ENCODE measurements at regions of chr17 and their contacts with region 1.

Region 1: DNA sequence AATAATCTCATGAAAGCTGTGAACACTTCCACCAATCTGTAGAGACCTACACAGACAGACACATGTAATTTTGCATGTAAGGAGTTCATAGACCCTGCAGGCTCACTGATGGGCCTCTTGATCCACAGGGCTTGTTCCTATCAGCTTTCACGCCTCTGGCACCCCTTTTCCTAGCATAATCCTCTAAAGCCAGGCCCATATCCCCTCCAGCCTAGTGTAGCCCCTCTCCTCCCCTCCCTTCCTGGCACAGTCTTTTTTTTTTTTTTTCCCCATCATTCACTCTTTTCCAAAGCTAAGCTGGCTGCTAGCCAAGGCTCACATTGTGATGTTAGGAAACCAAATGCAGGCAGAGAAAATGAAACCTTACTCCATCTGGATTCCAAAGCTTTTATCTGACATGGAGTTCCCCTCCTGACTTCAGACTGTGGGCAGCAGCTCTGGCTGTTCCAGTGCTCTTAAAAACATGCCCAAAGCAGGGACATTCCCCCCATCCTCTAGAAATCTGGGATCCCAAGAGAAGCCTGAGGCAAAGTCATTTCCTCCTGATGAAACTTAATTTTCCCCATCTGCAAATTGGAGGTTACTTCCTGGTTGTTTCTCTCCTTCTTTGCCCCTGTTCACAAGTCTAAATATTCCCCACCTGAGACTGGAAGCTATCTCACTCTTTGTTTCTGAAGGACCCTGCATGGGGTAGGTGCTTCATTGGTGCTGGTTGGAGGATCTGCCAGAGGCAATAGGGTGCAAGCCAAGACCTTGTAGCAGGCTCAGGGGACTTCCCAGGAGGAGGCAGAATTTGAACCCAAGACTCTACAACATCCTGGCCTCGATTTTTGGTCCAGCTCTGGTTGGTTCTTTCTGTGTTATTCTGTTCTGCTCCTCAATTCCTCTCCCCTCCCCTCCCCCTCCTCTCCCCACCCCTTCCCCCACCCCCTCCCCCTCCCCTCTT is 9.9 kb upstream of the CCL5 start:
- DNase-seq: no peak
- CTCF ChIP-seq: no peak

Region 2: GRCh38 chr17:35879773-35880654 is 10.1 kb before region 1 on chr17 and contains the start of gene CCL5:
- CTCF ChIA-PET with region 1: interaction called, 17 read pairs
- POLR2A ChIA-PET with region 1: interaction called, 4 read pairs
- DNase-seq: peak; percentile 87
- CTCF ChIP-seq: no peak